ENCODE measurements at regions of chr15 and their contacts with region 1.

Region 1: DNA sequence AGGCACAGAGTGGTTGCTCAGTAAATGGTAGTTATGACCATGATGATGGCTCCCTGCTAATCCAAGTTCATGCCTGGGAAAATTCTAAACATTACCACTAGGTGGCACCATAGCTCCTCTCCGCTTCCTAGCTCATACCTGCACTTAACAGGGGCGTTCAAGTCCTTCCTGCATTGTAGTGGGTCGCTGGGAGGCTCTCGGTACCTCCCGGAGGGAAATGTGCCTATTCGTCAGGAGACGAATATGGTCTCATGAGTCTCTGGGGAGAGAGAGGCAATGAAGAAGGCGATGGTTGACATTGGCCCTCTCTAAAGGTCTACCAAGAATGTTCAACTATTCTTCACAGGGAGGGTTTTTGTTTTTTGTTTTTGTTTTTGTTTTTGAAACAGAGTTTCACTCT is 10.9 kb downstream of the MESP1 start:
- DNase-seq: peak; percentile 76 to 81
- H3K4me3 ChIP-seq: no peak overlapping the region
- H3K4me3 Mint-ChIP-seq: peak overlapping the region; percentile 50
- H3K27ac Mint-ChIP-seq: no peak overlapping the region
- H3K4me1 ChIP-seq: no peaks in the 10 kb centered on the region
- H3K4me1 Mint-ChIP-seq: no peaks in the 10 kb centered on the region
- H3K27me3 ChIP-seq: no peaks in the 10 kb centered on the region; the same call in 1 of the 2 replicates
- H3K27me3 Mint-ChIP-seq: peaks cover 8% of the 10 kb centered on the region
- CTCF ChIP-seq: peak; percentile 77 to 84

Region 2: GRCh38 chr15:89575146-89575655 is 164.9 kb before region 1 on chr15 and contains the start of gene TICRR:
- CTCF ChIA-PET with region 1: no interaction called
- POLR2A ChIA-PET with region 1: no interaction called
- intact Hi-C with region 1: no loop called
- DNase-seq: peak; percentile 97 to 99
- H3K4me3 ChIP-seq: peak within 1 kb of the TSS; percentile 62
- H3K4me3 Mint-ChIP-seq: peak within 1 kb of the TSS; percentile 79
- H3K27ac Mint-ChIP-seq: peak within 1 kb of the TSS; percentile 77
- H3K4me1 ChIP-seq: peaks cover 7% of the 10 kb centered on the region; the same call in 1 of the 2 replicates
- H3K4me1 Mint-ChIP-seq: peaks cover 18% of the 10 kb centered on the region
- H3K27me3 ChIP-seq: no peaks in the 10 kb centered on the region
- H3K27me3 Mint-ChIP-seq: peaks cover 3% of the 10 kb centered on the region
- CTCF ChIP-seq: no peak
- total RNA-seq, gene TICRR: 23.6 and 24.1 TPM in 2 replicates

Region 3: GRCh38 chr15:89874926-89875564 is 134.9 kb after region 1 on chr15:
- CTCF ChIA-PET with region 1: interaction called, 42 read pairs
- POLR2A ChIA-PET with region 1: no interaction called
- intact Hi-C with region 1: loop called (anchors 1 kb)
- DNase-seq: peak; percentile 76 to 82
- H3K4me3 ChIP-seq: no peak overlapping the region
- H3K4me3 Mint-ChIP-seq: no peak overlapping the region
- H3K27ac Mint-ChIP-seq: no peak overlapping the region
- H3K4me1 ChIP-seq: peaks cover 6% of the 10 kb centered on the region; the same call in 1 of the 2 replicates
- H3K4me1 Mint-ChIP-seq: no peaks in the 10 kb centered on the region
- H3K27me3 ChIP-seq: no peaks in the 10 kb centered on the region
- H3K27me3 Mint-ChIP-seq: no peaks in the 10 kb centered on the region
- CTCF ChIP-seq: peak; percentile 88 to 94

Region 4: GRCh38 chr15:89888214-89888804 is 148.2 kb after region 1 on chr15:
- CTCF ChIA-PET with region 1: interaction called, 15 read pairs
- POLR2A ChIA-PET with region 1: no interaction called
- intact Hi-C with region 1: loop called (anchors 1 kb)
- DNase-seq: peak in 1 of 2 experiments; percentile 39
- H3K4me3 ChIP-seq: no peak overlapping the region
- H3K4me3 Mint-ChIP-seq: no peak overlapping the region
- H3K27ac Mint-ChIP-seq: no peak overlapping the region
- H3K4me1 ChIP-seq: no peaks in the 10 kb centered on the region
- H3K4me1 Mint-ChIP-seq: no peaks in the 10 kb centered on the region
- H3K27me3 ChIP-seq: no peaks in the 10 kb centered on the region
- H3K27me3 Mint-ChIP-seq: no peaks in the 10 kb centered on the region
- CTCF ChIP-seq: peak; percentile 48 to 63

Region 5: GRCh38 chr15:90086868-90087268 is 346.7 kb after region 1 on chr15:
- CTCF ChIA-PET with region 1: interaction called, 3 read pairs
- POLR2A ChIA-PET with region 1: no interaction called
- intact Hi-C with region 1: loop called (anchors 5 kb)
- DNase-seq: peak; percentile 57 to 65
- H3K4me3 ChIP-seq: no peak overlapping the region
- H3K4me3 Mint-ChIP-seq: no peak overlapping the region
- H3K27ac Mint-ChIP-seq: no peak overlapping the region
- H3K4me1 ChIP-seq: no peaks in the 10 kb centered on the region
- H3K4me1 Mint-ChIP-seq: no peaks in the 10 kb centered on the region
- H3K27me3 ChIP-seq: no peaks in the 10 kb centered on the region
- H3K27me3 Mint-ChIP-seq: no peaks in the 10 kb centered on the region
- CTCF ChIP-seq: peak; percentile 79 to 81

Measured in Caco-2 (cell line).